ENCODE measurements at regions of chr12 and their contacts with region 1.

Region 1: DNA sequence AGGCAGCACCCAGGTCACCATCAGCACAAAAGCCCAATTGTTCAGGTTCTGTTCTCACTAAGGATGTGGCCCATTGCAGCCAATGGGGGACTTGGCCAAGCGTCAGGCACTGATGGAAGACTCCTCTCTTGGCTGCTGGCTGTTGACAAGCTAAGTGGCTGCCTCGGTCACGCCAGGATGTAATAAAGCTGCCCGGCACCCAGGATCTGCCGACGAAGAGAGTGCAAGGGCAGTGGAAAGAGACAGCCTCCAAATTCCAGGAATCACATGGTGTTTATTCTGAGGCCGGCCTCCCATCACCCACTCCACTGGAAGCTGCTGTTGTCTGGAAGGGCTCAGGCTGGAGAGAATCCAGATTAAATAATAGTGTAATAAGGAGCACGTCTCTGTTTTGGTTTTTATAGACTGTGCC is 451.8 kb upstream of the TBX3 start:
- DNase-seq: peak; percentile 3 to 72 (median 59)
- H3K4me3 ChIP-seq: peak overlapping the region in 17 of 59 donors; percentile 3 to 39 (median 18)
- H3K27ac ChIP-seq: peak overlapping the region in 42 of 59 donors; percentile 1 to 78 (median 48)
- H3K27me3 ChIP-seq: no peaks in the 10 kb centered on the region
- CTCF ChIP-seq: no peak

Region 2: GRCh38 chr12:114935658-114936057 is 200.1 kb before region 1 on chr12:
- intact Hi-C with region 1: loop called in 1 of 2 experiments (anchors 5 kb)
- DNase-seq: no peak
- H3K4me3 ChIP-seq: no peak overlapping the region
- H3K27ac ChIP-seq: no peak overlapping the region
- H3K27me3 ChIP-seq: peaks cover 0 to 4% (median 0%) of the 10 kb centered on the region in 45 donors
- CTCF ChIP-seq: peak in 46 of 56 donors; percentile 9 to 60 (median 34)

Region 3: DNA sequence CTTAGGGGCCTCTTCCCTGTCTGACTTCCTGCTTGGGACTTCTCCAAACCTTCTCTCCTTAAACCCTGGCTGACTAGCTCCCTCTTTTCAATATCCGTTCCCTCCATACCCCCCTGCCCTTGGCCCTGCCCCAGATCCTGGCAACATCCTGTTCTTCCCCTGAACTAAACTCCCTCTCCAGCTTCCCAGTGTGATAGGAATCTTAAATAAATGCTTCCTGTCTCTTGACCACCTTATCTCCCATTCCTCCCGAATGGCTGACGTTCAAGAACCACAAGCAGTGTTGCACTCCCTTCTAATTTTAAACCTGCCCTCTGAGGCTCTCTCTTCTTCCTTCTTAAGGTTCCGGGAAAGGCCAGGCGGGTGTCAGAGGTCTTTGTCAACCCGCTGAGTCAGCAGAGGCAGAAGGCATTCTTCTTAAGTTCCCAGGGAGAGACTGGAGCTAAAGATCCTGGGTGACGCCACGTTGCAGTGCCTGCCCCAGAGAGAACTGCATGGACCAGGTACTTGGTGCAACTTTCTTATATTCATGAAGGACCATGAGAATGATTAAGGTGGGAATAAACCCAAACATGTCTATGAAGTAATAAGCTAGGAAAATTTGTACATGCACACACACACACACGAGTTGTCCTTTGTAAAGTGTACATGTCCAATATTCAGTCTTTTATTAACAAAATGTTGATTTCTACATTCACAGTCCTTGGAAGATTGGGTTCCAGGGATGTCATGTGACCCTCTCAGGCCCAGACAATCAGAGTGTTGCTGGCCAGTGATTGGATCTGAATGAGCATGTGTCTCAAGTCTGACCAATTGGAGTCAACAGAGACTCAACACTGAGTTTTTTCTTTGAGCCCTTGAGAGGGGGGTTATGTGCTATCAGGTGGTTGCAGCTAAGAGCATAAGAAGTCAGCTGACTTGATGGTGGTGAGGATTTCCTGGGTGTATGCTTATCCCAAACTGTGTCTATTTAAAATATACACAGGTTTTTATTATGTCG is 31.6 kb before region 1 on chr12:
- intact Hi-C with region 1: no loop called
- DNase-seq: no peak
- H3K4me3 ChIP-seq: no peak overlapping the region
- H3K27ac ChIP-seq: no peak overlapping the region
- H3K27me3 ChIP-seq: no peaks in the 10 kb centered on the region
- CTCF ChIP-seq: no peak

Measured in dorsolateral prefrontal cortex (tissue), 120 donors.